Activated T-helper 1 cell treated with anti-CD3 and anti-CD28 coated beads, Interleukin-12 subunit alpha, Interleukin-12 subunit beta, Interleukin-2, Interleukin-4 antibody, amounts not matched to agents 30 ng/mL and 10 ng/mL and 1 ng/mL, durations not matched to agents 14 hours and 24 hours and 36 hours (primary cell): ENCODE measurements at regions of chr9 and their contacts with region 1.

Region 1: GRCh38 chr9:14981291-14981950 is 71.2 kb upstream of the FREM1 start:
- DNase-seq: no peak
- H3K4me3 Mint-ChIP-seq: no peak overlapping the region
- H3K27ac Mint-ChIP-seq: no peak overlapping the region
- H3K4me1 Mint-ChIP-seq: no peaks in the 10 kb centered on the region
- H3K27me3 Mint-ChIP-seq: peaks cover 5% of the 10 kb centered on the region

Region 2: GRCh38 chr9:14967450-14968321 is 13.7 kb before region 1 on chr9:
- intact Hi-C with region 1: loop called (anchors 2 kb)
- DNase-seq: no peak
- H3K4me3 Mint-ChIP-seq: no peak overlapping the region
- H3K27ac Mint-ChIP-seq: no peak overlapping the region
- H3K4me1 Mint-ChIP-seq: no peaks in the 10 kb centered on the region
- H3K27me3 Mint-ChIP-seq: peaks cover 9% of the 10 kb centered on the region